ENCODE measurements at regions of chr21 and their contacts with region 1.

Region 1: DNA sequence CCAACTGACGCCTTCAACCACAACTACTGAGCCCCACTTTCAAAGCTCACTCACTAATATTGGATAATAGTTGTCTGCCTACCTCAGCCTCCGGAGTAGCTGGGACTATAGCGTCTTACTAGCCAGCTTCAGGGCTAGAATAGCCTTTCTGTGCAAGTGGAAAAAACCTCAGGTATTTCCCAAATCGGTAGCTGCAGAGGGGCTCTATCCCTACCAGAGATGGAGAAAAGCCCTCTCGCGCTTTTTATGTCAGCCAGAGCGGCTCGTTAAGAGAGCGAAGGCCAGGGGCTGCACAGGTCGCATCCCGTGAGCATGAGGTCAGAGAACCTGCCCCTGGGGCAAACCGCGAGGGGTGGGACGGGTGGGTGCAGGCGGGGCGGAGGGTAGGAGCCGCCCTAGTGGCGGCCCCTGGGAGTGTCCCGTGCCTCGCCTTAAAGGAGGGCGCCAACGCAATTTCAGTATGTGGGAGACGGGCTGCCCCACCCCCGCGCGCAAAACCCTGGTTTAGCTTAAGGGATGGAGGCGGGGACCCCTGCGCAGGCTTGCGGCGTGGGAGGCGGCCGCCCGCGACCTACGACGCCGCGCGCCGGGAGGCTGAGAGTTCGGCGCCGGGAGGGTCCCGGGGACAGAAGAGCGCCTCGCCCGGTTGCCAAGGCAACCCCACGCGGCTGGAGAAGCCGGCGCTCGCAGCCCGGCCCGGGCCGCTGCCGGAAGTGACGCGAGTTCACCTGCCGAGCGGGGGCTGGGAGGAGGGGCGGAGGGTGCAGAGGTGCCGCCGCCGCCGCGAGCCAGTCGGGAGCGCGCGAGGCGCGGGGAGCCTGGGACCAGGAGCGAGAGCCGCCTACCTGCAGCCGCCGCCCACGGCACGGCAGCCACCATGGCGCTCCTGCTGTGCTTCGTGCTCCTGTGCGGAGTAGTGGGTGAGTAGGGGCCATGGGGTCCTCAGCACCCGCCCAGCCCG is at the start of gene CXADR:
- DNase-seq: peak; percentile 59 to 94
- H3K4me3 ChIP-seq: peak within 1 kb of the TSS; percentile 85 to 100 (median 96)
- H3K27ac ChIP-seq: peak within 1 kb of the TSS; percentile 95
- H3K4me1 ChIP-seq: peaks cover 2 to 13% (median 11%) of the 10 kb centered on the region in 4 experiments
- H3K27me3 ChIP-seq: no peaks in the 10 kb centered on the region
- CTCF ChIP-seq: peak; percentile 51 to 71 (median 57)
- EP300 ChIP-seq: peak; percentile 41 to 62; a peak in 2 of 3 replicates
- POLR2A ChIP-seq: peak; percentile 81 to 93
- RAD21 ChIP-seq: peak; percentile 36 to 40; a peak in 3 of 4 replicates
- total RNA-seq, gene CXADR: 142 and 145 TPM in 2 replicates

Region 2: GRCh38 chr21:17501107-17502006 is 11.2 kb before region 1 on chr21:
- CTCF ChIA-PET with region 1: interaction called, 17 read pairs
- POLR2A ChIA-PET with region 1: interaction called, 5 read pairs
- DNase-seq: no peak
- H3K4me3 ChIP-seq: no peak overlapping the region
- H3K27ac ChIP-seq: no peak overlapping the region
- H3K4me1 ChIP-seq: no peaks in the 10 kb centered on the region
- H3K27me3 ChIP-seq: no peaks in the 10 kb centered on the region
- CTCF ChIP-seq: no peak
- EP300 ChIP-seq: no peak
- POLR2A ChIP-seq: no peak
- RAD21 ChIP-seq: no peak

Region 3: DNA sequence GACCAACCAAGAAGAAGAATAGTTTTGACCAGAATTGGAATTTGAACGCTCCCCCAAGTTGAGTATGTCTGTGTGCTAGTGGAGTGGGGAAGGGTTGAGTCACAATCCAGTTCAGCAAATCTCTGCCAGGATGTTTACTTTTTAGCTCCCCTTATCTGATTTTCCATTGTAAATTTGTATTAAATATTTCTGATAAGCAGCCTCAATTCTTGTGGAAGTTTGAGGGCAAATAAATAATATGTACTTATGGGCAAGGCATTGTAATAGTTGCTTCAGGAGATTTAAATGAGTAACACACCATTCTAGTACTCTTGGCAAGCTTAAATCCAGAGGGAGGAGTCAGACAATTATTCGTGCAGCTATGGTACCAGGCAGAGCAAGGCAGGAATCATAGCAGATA is 14.7 kb after region 1 on chr21:
- CTCF ChIA-PET with region 1: interaction called, 12 read pairs
- POLR2A ChIA-PET with region 1: interaction called, 144 read pairs
- DNase-seq: no peak
- H3K4me3 ChIP-seq: peak overlapping the region in 1 of 4 experiments; percentile 20; a peak in 1 of 8 replicates
- H3K27ac ChIP-seq: no peak overlapping the region
- H3K4me1 ChIP-seq: peaks cover 2 to 14% (median 6%) of the 10 kb centered on the region in 4 experiments; a peak in 5 of 7 replicates
- H3K27me3 ChIP-seq: no peaks in the 10 kb centered on the region
- CTCF ChIP-seq: no peak
- EP300 ChIP-seq: no peak
- POLR2A ChIP-seq: no peak
- RAD21 ChIP-seq: no peak

Region 4: DNA sequence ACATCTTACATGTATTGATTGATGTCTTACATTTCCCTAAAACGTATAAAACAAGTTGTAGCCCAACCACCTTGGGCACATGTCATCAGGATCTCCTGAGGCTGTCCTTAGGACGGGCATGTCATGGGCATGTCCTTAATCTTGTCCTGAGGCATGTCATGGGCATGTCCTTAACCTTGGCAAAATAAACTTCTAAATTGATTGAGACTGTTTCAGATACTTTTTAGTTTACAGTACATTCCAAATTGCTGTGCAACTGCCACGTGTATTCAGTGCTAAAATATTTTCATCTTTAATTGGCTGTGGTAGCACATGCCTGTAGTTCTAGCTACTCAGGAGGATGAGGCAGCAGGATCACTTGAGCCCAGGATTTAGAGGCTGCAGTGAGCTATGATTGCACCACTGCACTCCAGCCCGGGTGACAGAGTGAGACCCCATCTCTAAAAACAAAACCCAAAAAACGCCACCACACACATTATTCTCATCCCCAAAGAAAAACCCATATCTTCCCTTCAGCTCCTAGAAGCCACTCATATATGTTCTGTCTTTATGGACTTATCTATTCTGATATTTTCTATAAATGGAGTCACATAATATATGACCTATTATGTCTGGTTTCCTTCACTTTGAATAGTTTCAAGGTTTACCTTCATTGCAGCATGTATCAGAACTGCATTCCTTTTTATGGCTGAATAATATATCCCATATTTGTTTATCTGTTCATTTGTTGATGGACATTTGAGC is 196.2 kb after region 1 on chr21:
- CTCF ChIA-PET with region 1: no interaction called
- POLR2A ChIA-PET with region 1: no interaction called
- DNase-seq: no peak
- H3K4me3 ChIP-seq: no peak overlapping the region
- H3K27ac ChIP-seq: no peak overlapping the region
- H3K4me1 ChIP-seq: no peaks in the 10 kb centered on the region
- H3K27me3 ChIP-seq: no peaks in the 10 kb centered on the region
- CTCF ChIP-seq: no peak
- EP300 ChIP-seq: no peak
- POLR2A ChIP-seq: no peak
- RAD21 ChIP-seq: no peak